Tibial artery (tissue), 4 donors: ENCODE measurements at regions of chr16 and their contacts with region 1.

Region 1: GRCh38 chr16:2752035-2752849 is at the start of gene SRRM2:
- DNase-seq: peak; percentile 93 to 97
- H3K4me3 ChIP-seq: peak within 1 kb of the TSS; percentile 84 to 90
- H3K27ac ChIP-seq: peak within 1 kb of the TSS; percentile 89 to 100
- H3K4me1 ChIP-seq: peaks cover 0 to 45% (median 37%) of the 10 kb centered on the region in 4 donors
- H3K27me3 ChIP-seq: no peaks in the 10 kb centered on the region
- CTCF ChIP-seq: no peak

Region 2: GRCh38 chr16:2777231-2777902 is 25.1 kb after region 1 on chr16 and contains the start of gene ELOB:
- intact Hi-C with region 1: loop called (anchors 2 kb)
- DNase-seq: peak; percentile 84 to 93
- H3K4me3 ChIP-seq: peak within 1 kb of the TSS; percentile 77 to 83
- H3K27ac ChIP-seq: peak within 1 kb of the TSS; percentile 98 to 99
- H3K4me1 ChIP-seq: peaks cover 0 to 35% (median 27%) of the 10 kb centered on the region in 4 donors
- H3K27me3 ChIP-seq: peaks cover 0 to under 1% of the 10 kb centered on the region in 2 donors
- CTCF ChIP-seq: no peak